MCF 10A (cell line): ENCODE measurements at regions of chr3 and their contacts with region 1.

Region 1: DNA sequence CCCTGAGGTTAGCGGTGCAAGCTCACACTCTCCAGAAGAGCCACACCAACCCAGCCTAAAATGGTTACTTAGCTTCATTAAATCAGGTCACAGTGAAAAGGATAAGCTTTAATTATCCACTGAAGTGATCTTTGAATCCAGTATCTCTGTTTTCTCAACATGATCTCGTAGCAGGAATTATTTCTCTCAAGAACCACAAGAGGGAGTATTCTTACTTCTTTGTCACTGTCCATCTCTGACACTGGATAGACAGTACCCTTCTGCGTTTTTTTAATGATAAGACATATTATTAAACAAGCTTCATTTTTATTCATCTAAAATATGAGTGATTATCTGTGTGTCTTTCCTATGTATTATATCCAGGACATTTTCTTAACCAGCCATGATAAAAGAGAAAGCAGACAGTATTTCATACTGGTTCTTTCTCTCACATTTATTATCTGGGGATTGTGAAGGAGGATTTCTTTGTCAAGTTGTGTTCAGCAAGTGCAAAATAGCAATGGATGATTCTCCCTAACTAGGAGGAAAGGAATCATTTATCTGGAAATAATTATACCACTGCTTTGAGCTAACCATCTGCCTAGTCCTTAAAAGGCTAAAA is 105.4 kb upstream of the CCDC54 start:
- DNase-seq: peak; percentile 56
- H3K4me3 Mint-ChIP-seq: no peak overlapping the region
- H3K27ac Mint-ChIP-seq: peak overlapping the region; percentile 54
- H3K4me1 Mint-ChIP-seq: peaks cover 10% of the 10 kb centered on the region
- H3K27me3 Mint-ChIP-seq: no peaks in the 10 kb centered on the region
- CTCF ChIP-seq: peak; percentile 54

Region 2: DNA sequence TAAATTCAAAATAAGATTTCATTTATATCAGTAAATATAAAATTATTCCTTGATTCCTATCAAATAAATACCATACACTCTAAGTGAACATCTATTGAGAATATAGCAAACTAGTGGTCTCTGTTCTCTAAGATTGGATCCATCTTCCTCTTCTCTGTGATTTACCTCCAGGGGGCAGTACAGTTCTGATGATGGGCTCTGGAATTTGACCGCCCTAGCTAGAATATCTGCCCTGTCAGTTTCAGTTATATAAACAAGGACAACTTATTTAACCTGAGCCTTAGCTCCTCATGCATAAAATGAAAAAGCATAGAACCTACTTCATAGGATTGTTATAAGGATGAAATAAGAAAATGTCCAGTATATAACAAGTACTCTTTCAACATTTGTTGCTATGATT is 65.7 kb before region 1 on chr3:
- CTCF ChIA-PET with region 1: interaction called, 28 read pairs
- POLR2A ChIA-PET with region 1: interaction called, 10 read pairs
- intact Hi-C with region 1: loop called (anchors 1 kb)
- DNase-seq: peak; percentile 85
- H3K4me3 Mint-ChIP-seq: no peak overlapping the region
- H3K27ac Mint-ChIP-seq: no peak overlapping the region
- H3K4me1 Mint-ChIP-seq: peaks cover 42% of the 10 kb centered on the region
- H3K27me3 Mint-ChIP-seq: no peaks in the 10 kb centered on the region
- CTCF ChIP-seq: peak; percentile 57

Region 3: GRCh38 chr3:107392549-107393165 is 120.8 kb after region 1 on chr3:
- CTCF ChIA-PET with region 1: interaction called, 12 read pairs
- POLR2A ChIA-PET with region 1: interaction called, 4 read pairs
- intact Hi-C with region 1: no loop called
- DNase-seq: peak; percentile 68
- H3K4me3 Mint-ChIP-seq: no peak overlapping the region
- H3K27ac Mint-ChIP-seq: no peak overlapping the region
- H3K4me1 Mint-ChIP-seq: no peaks in the 10 kb centered on the region
- H3K27me3 Mint-ChIP-seq: no peaks in the 10 kb centered on the region
- CTCF ChIP-seq: no peak

Region 4: GRCh38 chr3:107421170-107421792 is 149.4 kb after region 1 on chr3:
- CTCF ChIA-PET with region 1: interaction called, 135 read pairs
- POLR2A ChIA-PET with region 1: interaction called, 23 read pairs
- intact Hi-C with region 1: loop called (anchors 1 kb)
- DNase-seq: peak; percentile 81
- H3K4me3 Mint-ChIP-seq: peak overlapping the region; percentile 63
- H3K27ac Mint-ChIP-seq: peak overlapping the region; percentile 75
- H3K4me1 Mint-ChIP-seq: peaks cover 18% of the 10 kb centered on the region
- H3K27me3 Mint-ChIP-seq: no peaks in the 10 kb centered on the region
- CTCF ChIP-seq: peak; percentile 62

Region 5: GRCh38 chr3:107522510-107523288 is 250.8 kb after region 1 on chr3 and contains the start of gene BBX:
- CTCF ChIA-PET with region 1: interaction called, 11 read pairs
- POLR2A ChIA-PET with region 1: interaction called, 8 read pairs
- intact Hi-C with region 1: loop called (anchors 5 kb)
- DNase-seq: peak; percentile 93
- H3K4me3 Mint-ChIP-seq: peak within 1 kb of the TSS; percentile 85
- H3K27ac Mint-ChIP-seq: peak within 1 kb of the TSS; percentile 93
- H3K4me1 Mint-ChIP-seq: peaks cover 14% of the 10 kb centered on the region
- H3K27me3 Mint-ChIP-seq: no peaks in the 10 kb centered on the region
- CTCF ChIP-seq: no peak
- total RNA-seq, gene BBX: 73.2 and 77.2 TPM in 2 replicates